ENCODE measurements at regions of chr5 and their contacts with region 1.

Region 1: DNA sequence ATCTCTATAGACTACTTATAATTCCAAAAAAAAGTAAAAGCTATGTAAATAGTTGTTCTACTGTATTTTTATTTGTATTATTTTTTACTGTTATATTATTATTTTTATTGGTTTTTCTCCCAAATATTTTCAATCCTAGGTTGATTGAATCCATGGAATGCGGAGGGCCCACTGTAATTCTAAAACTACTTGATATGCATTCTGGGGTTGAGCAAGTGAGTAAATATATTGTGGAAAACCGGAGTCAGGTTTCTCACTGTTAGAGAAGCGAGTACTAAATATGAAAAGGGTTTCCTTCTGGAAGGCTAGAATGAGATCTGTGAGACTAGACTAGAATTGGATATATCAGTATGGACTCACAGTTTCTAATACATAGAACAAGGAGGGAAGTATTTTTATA is 66.5 kb downstream of the FBXW11 start:
- DNase-seq: no peak
- ATAC-seq: no peak
- H3K4me3 Mint-ChIP-seq: no peak overlapping the region
- H3K27ac Mint-ChIP-seq: no peak overlapping the region
- H3K4me1 Mint-ChIP-seq: peaks cover 49% of the 10 kb centered on the region
- H3K27me3 Mint-ChIP-seq: no peaks in the 10 kb centered on the region
- CTCF ChIP-seq: no peak

Region 2: DNA sequence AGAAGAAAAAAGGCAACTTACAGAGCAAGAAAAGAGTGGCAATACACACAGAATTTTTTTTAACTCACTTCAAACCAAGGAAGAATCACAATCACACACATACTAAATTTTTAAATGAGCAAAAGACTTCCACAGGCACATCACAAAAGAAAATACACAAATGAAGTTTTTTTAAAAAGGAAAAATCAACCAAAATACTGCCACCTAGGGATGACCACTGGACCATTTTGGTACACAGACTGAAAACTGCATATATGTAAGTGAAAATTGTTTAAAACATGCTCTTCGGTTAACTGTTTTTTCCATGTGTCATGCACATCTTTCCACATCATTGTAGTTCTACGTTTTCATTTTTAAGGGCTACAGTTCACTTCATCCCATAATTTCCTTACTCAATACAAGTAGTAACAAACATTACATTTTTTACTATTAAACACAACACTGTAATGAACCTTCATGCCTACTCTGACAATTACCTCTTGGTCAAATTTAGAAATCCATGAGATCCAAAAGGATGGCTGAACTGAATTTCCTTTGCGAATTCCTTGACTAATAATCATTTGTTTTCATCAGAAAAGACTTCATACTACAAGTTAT is 12.5 kb before region 1 on chr5:
- CTCF ChIA-PET with region 1: interaction called, 4 read pairs
- POLR2A ChIA-PET with region 1: interaction called, 3 read pairs
- intact Hi-C with region 1: loop called (anchors 2 kb)
- DNase-seq: no peak
- ATAC-seq: no peak
- H3K4me3 Mint-ChIP-seq: no peak overlapping the region
- H3K27ac Mint-ChIP-seq: peak overlapping the region; percentile 4
- H3K4me1 Mint-ChIP-seq: peaks cover 63% of the 10 kb centered on the region
- H3K27me3 Mint-ChIP-seq: no peaks in the 10 kb centered on the region
- CTCF ChIP-seq: no peak

Measured in activated B cell treated with CpG ODN at 0.5 μM for 24 hours (primary cell).